PC-9 (cell line): ENCODE measurements at regions of chr5 and their contacts with region 1.

Region 1: DNA sequence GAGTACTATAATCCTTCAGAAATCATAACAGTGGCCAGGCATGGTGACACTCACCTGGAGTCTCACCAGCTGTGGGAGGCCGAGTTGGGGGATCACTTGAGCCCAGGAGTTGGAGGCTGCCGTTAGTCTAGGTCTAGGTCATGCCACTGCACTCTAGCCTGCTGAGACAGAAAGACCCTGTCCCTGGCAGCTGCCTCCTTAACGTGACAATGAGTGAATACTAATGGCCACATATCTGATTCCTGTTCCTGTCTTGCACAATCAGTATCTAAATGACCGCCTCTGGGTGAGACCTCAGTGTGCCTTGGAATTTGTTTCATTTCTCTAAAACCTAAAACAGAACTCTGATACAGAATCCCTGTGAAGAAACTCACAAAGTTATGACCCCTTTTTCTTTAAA is 131.0 kb upstream of the DAB2 start:
- DNase-seq: no peak
- H3K4me3 ChIP-seq: no peak overlapping the region
- H3K27ac ChIP-seq: no peak overlapping the region
- H3K4me1 ChIP-seq: no peaks in the 10 kb centered on the region
- H3K27me3 ChIP-seq: no peaks in the 10 kb centered on the region
- CTCF ChIP-seq: no peak

Region 2: GRCh38 chr5:39340506-39340905 is 215.3 kb before region 1 on chr5:
- CTCF ChIA-PET with region 1: no interaction called
- POLR2A ChIA-PET with region 1: no interaction called
- intact Hi-C with region 1: no loop called
- DNase-seq: no peak
- H3K4me3 ChIP-seq: no peak overlapping the region
- H3K27ac ChIP-seq: no peak overlapping the region
- H3K4me1 ChIP-seq: no peaks in the 10 kb centered on the region
- H3K27me3 ChIP-seq: no peaks in the 10 kb centered on the region
- CTCF ChIP-seq: no peak

Region 3: GRCh38 chr5:39465843-39466242 is 89.9 kb before region 1 on chr5:
- CTCF ChIA-PET with region 1: interaction called, 11 read pairs
- POLR2A ChIA-PET with region 1: no interaction called
- intact Hi-C with region 1: no loop called
- DNase-seq: no peak
- H3K4me3 ChIP-seq: no peak overlapping the region
- H3K27ac ChIP-seq: no peak overlapping the region
- H3K4me1 ChIP-seq: no peaks in the 10 kb centered on the region
- H3K27me3 ChIP-seq: no peaks in the 10 kb centered on the region
- CTCF ChIP-seq: no peak

Region 4: GRCh38 chr5:39513236-39513635 is 42.6 kb before region 1 on chr5:
- CTCF ChIA-PET with region 1: no interaction called
- POLR2A ChIA-PET with region 1: no interaction called
- intact Hi-C with region 1: no loop called
- DNase-seq: peak; percentile 55 to 70
- H3K4me3 ChIP-seq: no peak overlapping the region
- H3K27ac ChIP-seq: no peak overlapping the region
- H3K4me1 ChIP-seq: peaks cover 16% of the 10 kb centered on the region
- H3K27me3 ChIP-seq: no peaks in the 10 kb centered on the region
- CTCF ChIP-seq: no peak